PC-9 (cell line): ENCODE measurements at regions of chr3 and their contacts with region 1.

Region 1: GRCh38 chr3:72818092-72818773 is 30.0 kb downstream of the SHQ1 start:
- DNase-seq: peak in 1 of 2 experiments; percentile 11
- H3K4me3 ChIP-seq: no peak overlapping the region
- H3K27ac ChIP-seq: no peak overlapping the region
- H3K4me1 ChIP-seq: peaks cover 17% of the 10 kb centered on the region
- H3K27me3 ChIP-seq: no peaks in the 10 kb centered on the region
- CTCF ChIP-seq: peak; percentile 70

Region 2: DNA sequence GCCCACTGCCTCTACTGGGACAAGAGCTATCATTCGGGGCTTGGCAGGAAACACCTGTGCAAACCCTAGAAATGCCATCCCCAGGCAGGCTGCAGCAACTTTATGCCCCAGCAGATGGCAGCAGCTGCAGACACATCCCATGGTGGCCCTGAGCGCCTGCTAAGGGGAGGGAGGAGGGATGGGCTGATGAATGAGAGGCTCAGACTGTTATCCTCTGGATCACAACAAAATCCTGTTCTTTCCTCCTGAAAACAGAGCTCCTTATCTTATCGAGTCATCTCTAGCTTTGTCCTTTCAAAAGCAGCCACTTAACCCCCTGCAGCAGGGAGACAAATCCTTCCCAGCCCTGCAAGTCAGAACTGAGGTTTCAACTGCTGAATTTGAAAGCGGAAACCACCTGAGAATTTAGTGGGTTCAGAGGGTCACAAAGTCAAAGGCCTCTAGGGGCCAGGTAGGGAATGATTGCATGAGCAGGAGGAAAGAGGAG is 942.7 kb before region 1 on chr3:
- CTCF ChIA-PET with region 1: no interaction called
- POLR2A ChIA-PET with region 1: no interaction called
- intact Hi-C with region 1: loop called (anchors 1 kb)
- DNase-seq: peak in 1 of 2 experiments; percentile 58
- H3K4me3 ChIP-seq: no peak overlapping the region
- H3K27ac ChIP-seq: no peak overlapping the region
- H3K4me1 ChIP-seq: no peaks in the 10 kb centered on the region
- H3K27me3 ChIP-seq: peaks cover 18% of the 10 kb centered on the region; the same call in 1 of the 2 replicates
- CTCF ChIP-seq: peak; percentile 69

Region 3: GRCh38 chr3:71955240-71956068 is 862.8 kb before region 1 on chr3:
- CTCF ChIA-PET with region 1: no interaction called
- POLR2A ChIA-PET with region 1: no interaction called
- intact Hi-C with region 1: loop called (anchors 1 kb)
- DNase-seq: peak; percentile 36 to 48
- H3K4me3 ChIP-seq: no peak overlapping the region
- H3K27ac ChIP-seq: no peak overlapping the region
- H3K4me1 ChIP-seq: no peaks in the 10 kb centered on the region
- H3K27me3 ChIP-seq: no peaks in the 10 kb centered on the region
- CTCF ChIP-seq: peak; percentile 58

Region 4: GRCh38 chr3:72482589-72483321 is 335.5 kb before region 1 on chr3:
- CTCF ChIA-PET with region 1: no interaction called
- POLR2A ChIA-PET with region 1: no interaction called
- intact Hi-C with region 1: loop called (anchors 5 kb)
- DNase-seq: peak; percentile 51 to 76
- H3K4me3 ChIP-seq: peak overlapping the region; percentile 46; the same call in 1 of the 2 replicates
- H3K27ac ChIP-seq: peak overlapping the region; percentile 49
- H3K4me1 ChIP-seq: peaks cover 32% of the 10 kb centered on the region
- H3K27me3 ChIP-seq: no peaks in the 10 kb centered on the region
- CTCF ChIP-seq: no peak

Region 5: GRCh38 chr3:72665701-72666443 is 152.4 kb before region 1 on chr3:
- CTCF ChIA-PET with region 1: interaction called, 6 read pairs
- POLR2A ChIA-PET with region 1: no interaction called
- intact Hi-C with region 1: loop called (anchors 1 kb)
- DNase-seq: peak in 1 of 2 experiments; percentile 44
- H3K4me3 ChIP-seq: no peak overlapping the region
- H3K27ac ChIP-seq: no peak overlapping the region
- H3K4me1 ChIP-seq: peaks cover under 1% of the 10 kb centered on the region
- H3K27me3 ChIP-seq: no peaks in the 10 kb centered on the region
- CTCF ChIP-seq: peak; percentile 66

Region 6: DNA sequence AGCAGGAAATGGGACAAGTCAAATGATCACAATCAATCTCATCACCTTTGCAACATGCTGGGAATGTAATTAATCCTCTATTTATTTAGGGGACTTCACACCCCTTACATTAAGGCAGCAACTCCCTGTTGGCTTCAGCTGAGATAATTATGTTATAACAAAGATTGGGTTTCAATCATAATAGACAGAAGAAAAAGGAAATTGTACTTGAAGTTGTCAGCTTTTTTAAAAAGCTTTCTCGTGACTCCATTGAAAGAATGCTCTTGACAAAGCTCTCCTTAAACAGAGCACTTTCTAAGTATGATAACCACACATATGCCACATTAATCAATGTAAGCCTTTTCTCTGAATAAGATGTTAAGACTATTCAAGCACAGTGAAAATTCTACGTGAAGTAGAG is 35.7 kb before region 1 on chr3:
- CTCF ChIA-PET with region 1: no interaction called
- POLR2A ChIA-PET with region 1: no interaction called
- intact Hi-C with region 1: no loop called
- DNase-seq: no peak
- H3K4me3 ChIP-seq: no peak overlapping the region
- H3K27ac ChIP-seq: no peak overlapping the region
- H3K4me1 ChIP-seq: no peaks in the 10 kb centered on the region
- H3K27me3 ChIP-seq: no peaks in the 10 kb centered on the region
- CTCF ChIP-seq: no peak

Region 7: DNA sequence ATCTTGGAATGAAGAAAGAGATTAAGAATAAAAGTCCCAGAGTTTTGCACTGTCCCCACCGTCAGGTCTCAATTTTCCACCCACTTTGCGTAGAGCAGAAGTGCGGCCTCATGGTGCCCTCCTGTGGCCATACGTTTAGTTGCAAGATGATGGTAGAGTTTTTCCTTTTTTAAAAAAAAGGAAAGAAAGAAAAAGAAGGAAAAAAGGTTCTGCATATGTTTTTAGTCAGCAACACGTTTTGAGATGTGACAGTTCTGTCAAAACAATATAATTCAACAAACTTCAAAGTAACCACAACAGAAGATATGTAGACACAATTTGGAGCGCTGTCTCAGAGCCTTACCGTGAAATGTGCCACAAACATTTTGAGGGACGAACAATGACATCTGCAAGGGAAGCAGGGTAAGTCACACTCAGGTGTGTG is 267.9 kb after region 1 on chr3:
- CTCF ChIA-PET with region 1: no interaction called
- POLR2A ChIA-PET with region 1: no interaction called
- intact Hi-C with region 1: loop called (anchors 10 kb)
- DNase-seq: peak in 1 of 2 experiments; percentile 33
- H3K4me3 ChIP-seq: no peak overlapping the region
- H3K27ac ChIP-seq: no peak overlapping the region
- H3K4me1 ChIP-seq: no peaks in the 10 kb centered on the region
- H3K27me3 ChIP-seq: no peaks in the 10 kb centered on the region
- CTCF ChIP-seq: peak; percentile 79

Region 8: GRCh38 chr3:73100741-73101559 is 282.7 kb after region 1 on chr3:
- CTCF ChIA-PET with region 1: no interaction called
- POLR2A ChIA-PET with region 1: no interaction called
- intact Hi-C with region 1: no loop called
- DNase-seq: peak; percentile 55 to 70
- H3K4me3 ChIP-seq: no peak overlapping the region
- H3K27ac ChIP-seq: no peak overlapping the region
- H3K4me1 ChIP-seq: no peaks in the 10 kb centered on the region
- H3K27me3 ChIP-seq: peaks cover 35% of the 10 kb centered on the region
- CTCF ChIP-seq: peak; percentile 90

Region 9: GRCh38 chr3:73484656-73485248 is 666.5 kb after region 1 on chr3:
- CTCF ChIA-PET with region 1: no interaction called
- POLR2A ChIA-PET with region 1: no interaction called
- intact Hi-C with region 1: no loop called
- DNase-seq: no peak
- H3K4me3 ChIP-seq: no peak overlapping the region
- H3K27ac ChIP-seq: no peak overlapping the region
- H3K4me1 ChIP-seq: no peaks in the 10 kb centered on the region
- H3K27me3 ChIP-seq: peaks cover 15% of the 10 kb centered on the region; the same call in 1 of the 2 replicates
- CTCF ChIP-seq: no peak